Natural killer cell (primary cell): ENCODE measurements at regions of chr9 and their contacts with region 1.

Region 1: DNA sequence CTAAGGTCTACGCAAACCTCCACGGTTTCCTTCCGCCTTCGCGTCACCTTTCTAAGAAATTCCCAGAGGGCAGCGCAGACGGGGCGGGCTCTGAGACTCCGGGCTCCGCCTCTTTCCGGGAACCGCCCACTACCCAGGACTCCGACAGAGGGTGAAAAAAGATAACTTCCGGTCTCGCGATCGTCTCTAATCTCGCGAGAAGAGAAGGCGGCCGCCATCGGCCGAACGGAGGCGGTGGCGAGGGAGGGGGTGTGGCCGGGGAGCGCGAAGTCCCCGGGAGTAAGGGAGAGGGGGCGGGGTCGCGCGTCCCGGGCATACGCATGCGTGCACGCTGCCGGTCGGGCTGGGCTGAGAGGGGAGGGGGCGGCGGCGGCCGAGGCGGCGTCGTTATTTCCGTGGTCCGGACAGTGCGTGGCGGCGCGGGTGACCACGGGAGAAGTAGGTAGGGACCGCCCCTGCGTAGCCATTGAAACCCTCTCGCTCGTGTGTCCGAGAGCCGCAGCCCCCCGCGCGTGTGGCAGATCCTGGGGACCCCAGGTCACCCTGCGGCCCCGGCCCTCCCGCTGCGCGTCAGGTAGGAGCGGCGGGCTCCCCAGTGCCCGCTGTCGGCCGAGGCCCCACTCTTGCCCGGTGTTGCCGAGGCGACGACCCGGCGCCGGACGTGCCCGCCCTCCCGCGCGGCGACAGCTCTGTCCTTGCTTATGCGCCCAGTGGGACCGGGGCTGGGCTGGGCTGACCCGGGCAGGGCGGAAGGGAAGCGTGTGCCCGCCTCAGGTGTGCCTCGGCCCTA is at the start of gene NAA35:
- DNase-seq: peak; percentile 98 to 100
- ATAC-seq: peak; percentile 89 to 96 (median 89)
- H3K4me3 ChIP-seq: peak within 1 kb of the TSS; percentile 65
- H3K4me3 Mint-ChIP-seq: peak within 1 kb of the TSS; percentile 49
- H3K27ac ChIP-seq: peak within 1 kb of the TSS; percentile 96
- H3K27ac Mint-ChIP-seq: peak within 1 kb of the TSS in 1 of 2 donors; percentile 98
- H3K4me1 ChIP-seq: peaks cover 10% of the 10 kb centered on the region
- H3K4me1 Mint-ChIP-seq: peaks cover 6 to 19% of the 10 kb centered on the region in 2 donors
- H3K27me3 ChIP-seq: no peaks in the 10 kb centered on the region
- H3K27me3 Mint-ChIP-seq: no peaks in the 10 kb centered on the region
- CTCF ChIP-seq: no peak
- total RNA-seq, gene NAA35: 19.9 to 27.6 (median 21.0) TPM

Region 2: DNA sequence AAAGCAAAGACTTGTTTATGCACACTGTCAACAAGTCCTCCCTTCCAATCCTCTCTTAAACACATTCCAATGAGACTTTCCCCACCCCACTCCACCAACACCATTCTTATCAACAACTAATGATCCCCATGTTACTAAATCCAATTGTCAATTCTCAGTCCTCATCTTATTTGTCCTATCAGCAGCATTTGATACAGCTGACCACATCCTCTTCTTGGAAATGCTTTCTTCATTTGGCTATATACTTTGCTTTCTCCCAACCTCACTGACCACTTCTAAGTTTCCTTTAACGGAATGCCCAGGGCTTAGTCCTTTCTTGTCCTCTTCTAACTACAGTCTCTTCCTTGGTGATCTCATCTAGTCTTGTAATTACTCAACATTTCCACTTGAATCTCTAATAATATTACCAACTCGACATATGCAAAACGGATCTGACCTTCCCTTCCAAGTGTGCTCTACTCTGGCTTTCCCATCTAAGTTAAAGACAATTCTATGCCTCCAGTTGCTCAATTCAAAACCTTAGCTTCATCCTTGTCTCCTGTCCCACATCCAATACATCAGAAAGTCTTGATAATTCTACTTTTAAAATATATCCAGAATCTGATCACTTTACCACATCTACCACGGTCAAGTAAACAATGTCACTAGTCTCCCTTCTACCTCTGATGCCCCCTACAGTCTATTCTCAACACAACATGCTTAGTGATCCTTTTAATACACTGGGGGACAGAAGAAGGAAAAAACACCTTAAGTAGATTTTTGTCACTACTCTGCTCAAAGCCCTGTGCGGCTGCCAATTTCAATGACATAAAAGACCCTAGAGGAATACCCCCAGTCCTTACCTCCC is 224.8 kb before region 1 on chr9:
- intact Hi-C with region 1: loop called (anchors 5 kb)
- DNase-seq: peak in 1 of 2 donors; percentile 36
- ATAC-seq: peak; percentile 30 to 61 (median 32)
- H3K4me3 ChIP-seq: no peak overlapping the region
- H3K4me3 Mint-ChIP-seq: peak overlapping the region; percentile 78
- H3K27ac ChIP-seq: peak overlapping the region; percentile 81
- H3K27ac Mint-ChIP-seq: peak overlapping the region; percentile 82 to 91
- H3K4me1 ChIP-seq: peaks cover 26% of the 10 kb centered on the region
- H3K4me1 Mint-ChIP-seq: peaks cover 72 to 75% of the 10 kb centered on the region in 2 donors
- H3K27me3 ChIP-seq: no peaks in the 10 kb centered on the region
- H3K27me3 Mint-ChIP-seq: no peaks in the 10 kb centered on the region
- CTCF ChIP-seq: peak; percentile 28

Region 3: GRCh38 chr9:85741875-85742629 is 199.0 kb before region 1 on chr9 and contains the start of gene AGTPBP1:
- intact Hi-C with region 1: loop called (anchors 1 kb)
- DNase-seq: peak; percentile 98
- ATAC-seq: peak; percentile 83 to 95 (median 88)
- H3K4me3 ChIP-seq: peak within 1 kb of the TSS; percentile 87
- H3K4me3 Mint-ChIP-seq: peak within 1 kb of the TSS; percentile 93
- H3K27ac ChIP-seq: peak within 1 kb of the TSS; percentile 92
- H3K27ac Mint-ChIP-seq: peak within 1 kb of the TSS; percentile 91 to 94
- H3K4me1 ChIP-seq: peaks cover 26% of the 10 kb centered on the region
- H3K4me1 Mint-ChIP-seq: peaks cover 67 to 77% of the 10 kb centered on the region in 2 donors
- H3K27me3 ChIP-seq: no peaks in the 10 kb centered on the region
- H3K27me3 Mint-ChIP-seq: no peaks in the 10 kb centered on the region
- CTCF ChIP-seq: no peak
- total RNA-seq, gene AGTPBP1: 140 to 150 (median 140) TPM

Region 4: DNA sequence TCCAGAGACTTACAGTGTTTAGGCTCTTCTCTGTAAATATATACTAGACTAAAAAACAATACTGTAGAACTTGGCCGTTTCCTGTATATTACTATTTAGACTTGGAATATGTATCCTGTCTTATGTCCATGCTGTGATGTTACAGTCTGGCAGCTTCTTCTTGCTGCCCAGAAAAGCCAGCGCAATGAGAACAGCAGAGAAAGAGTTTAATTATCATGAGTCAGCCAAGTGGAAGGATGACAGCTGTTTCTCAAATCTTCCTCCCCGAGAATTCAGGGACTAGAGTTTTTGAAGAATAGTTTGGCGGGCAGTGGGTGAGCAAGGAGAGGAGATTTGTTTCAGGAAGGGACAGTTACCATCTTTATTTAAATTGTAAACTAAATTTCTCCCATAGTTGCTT is 37.5 kb after region 1 on chr9:
- intact Hi-C with region 1: no loop called
- DNase-seq: no peak
- ATAC-seq: no peak
- H3K4me3 ChIP-seq: no peak overlapping the region
- H3K4me3 Mint-ChIP-seq: no peak overlapping the region
- H3K27ac ChIP-seq: no peak overlapping the region
- H3K27ac Mint-ChIP-seq: peak overlapping the region in 1 of 2 donors; percentile 7
- H3K4me1 ChIP-seq: no peaks in the 10 kb centered on the region
- H3K4me1 Mint-ChIP-seq: peaks cover 0 to 7% of the 10 kb centered on the region in 2 donors
- H3K27me3 ChIP-seq: no peaks in the 10 kb centered on the region
- H3K27me3 Mint-ChIP-seq: no peaks in the 10 kb centered on the region
- CTCF ChIP-seq: no peak

Region 5: DNA sequence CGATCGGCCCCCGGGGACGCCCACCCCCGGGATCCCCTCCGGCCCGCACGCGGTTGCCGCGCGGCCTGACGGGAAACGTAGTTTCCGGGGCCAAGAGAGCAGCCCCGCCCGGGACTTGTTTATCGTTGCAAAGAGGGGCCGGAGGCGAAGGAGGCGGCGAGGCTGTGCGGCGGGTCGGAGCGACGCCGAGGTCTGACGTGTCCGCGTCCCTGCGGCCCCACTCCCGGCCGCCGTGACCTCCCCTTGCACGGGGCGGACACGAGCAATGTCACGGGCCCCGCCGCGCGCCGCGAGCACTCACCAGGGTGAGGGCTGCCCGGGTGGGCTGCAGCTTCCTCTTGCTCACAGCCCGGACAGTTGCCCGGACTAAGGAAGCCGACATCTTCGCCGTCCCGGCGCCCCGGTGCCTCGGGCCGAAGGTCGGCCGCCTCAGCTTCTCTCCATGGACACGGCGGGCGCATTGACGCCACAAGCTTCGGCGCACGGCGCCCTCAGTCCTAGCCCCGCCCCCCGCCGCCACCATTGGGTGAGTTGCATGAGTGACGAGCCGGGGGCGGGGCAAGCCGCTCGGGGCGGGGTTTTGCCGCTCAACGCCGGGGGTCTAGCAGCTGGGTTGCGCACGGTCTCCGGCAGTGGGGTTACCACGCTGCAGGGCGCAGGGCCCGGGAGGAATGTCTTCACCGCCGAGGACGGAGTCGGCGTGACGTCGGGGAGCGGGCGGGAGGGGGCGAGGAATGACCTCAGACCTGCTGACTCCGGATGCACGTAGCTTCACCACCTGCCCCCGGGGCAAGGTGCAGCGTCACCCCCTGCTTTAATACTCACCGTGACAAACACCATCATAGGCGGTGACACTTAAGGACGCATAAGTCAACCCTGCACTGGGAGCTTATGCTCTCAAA is 341.3 kb after region 1 on chr9 and contains the start of gene ISCA1:
- intact Hi-C with region 1: loop called (anchors 2 kb)
- DNase-seq: peak; percentile 97 to 99
- ATAC-seq: peak; percentile 83 to 95 (median 84)
- H3K4me3 ChIP-seq: peak within 1 kb of the TSS; percentile 87
- H3K4me3 Mint-ChIP-seq: peak within 1 kb of the TSS; percentile 93
- H3K27ac ChIP-seq: peak within 1 kb of the TSS; percentile 98
- H3K27ac Mint-ChIP-seq: peak within 1 kb of the TSS; percentile 95 to 98
- H3K4me1 ChIP-seq: peaks cover 17% of the 10 kb centered on the region
- H3K4me1 Mint-ChIP-seq: peaks cover 34 to 38% of the 10 kb centered on the region in 2 donors
- H3K27me3 ChIP-seq: no peaks in the 10 kb centered on the region
- H3K27me3 Mint-ChIP-seq: no peaks in the 10 kb centered on the region
- CTCF ChIP-seq: no peak
- total RNA-seq, gene ISCA1: 57.3 to 67.6 (median 63.4) TPM

Region 6: DNA sequence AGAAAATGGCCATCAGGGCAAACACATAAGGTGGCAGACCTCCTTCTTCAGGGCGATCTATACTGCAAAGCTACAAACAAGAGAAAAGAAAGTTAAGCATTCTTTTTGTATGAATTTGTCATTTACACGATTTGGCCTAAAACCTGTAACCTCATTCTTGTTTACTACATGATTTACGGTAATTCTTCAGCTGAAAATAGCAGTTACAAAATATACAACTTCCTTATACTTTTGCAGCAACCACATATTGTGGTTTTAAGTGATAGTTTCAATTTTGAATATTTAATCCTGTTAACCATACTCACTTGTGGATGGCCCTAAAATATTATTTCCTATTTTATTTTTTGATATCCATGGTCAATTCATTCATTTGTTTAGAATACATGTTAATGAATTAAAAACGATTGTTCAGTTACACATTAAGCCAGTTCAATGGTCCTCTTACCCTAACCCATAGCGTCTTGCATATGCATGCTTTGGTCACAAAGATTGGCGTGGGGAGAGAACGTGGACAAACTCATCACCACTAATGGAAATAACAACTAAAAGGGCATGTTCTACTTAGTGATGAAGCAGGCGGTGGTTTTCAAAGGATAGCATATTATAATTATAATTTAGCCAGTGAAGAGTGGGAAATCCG is 396.6 kb after region 1 on chr9:
- intact Hi-C with region 1: loop called (anchors 5 kb)
- DNase-seq: peak in 1 of 2 donors; percentile 52
- ATAC-seq: peak; percentile 75 to 90 (median 81)
- H3K4me3 ChIP-seq: peak overlapping the region; percentile 33
- H3K4me3 Mint-ChIP-seq: peak overlapping the region; percentile 88
- H3K27ac ChIP-seq: peak overlapping the region; percentile 90
- H3K27ac Mint-ChIP-seq: peak overlapping the region; percentile 94
- H3K4me1 ChIP-seq: peaks cover 13% of the 10 kb centered on the region
- H3K4me1 Mint-ChIP-seq: peaks cover 31 to 35% of the 10 kb centered on the region in 2 donors
- H3K27me3 ChIP-seq: no peaks in the 10 kb centered on the region
- H3K27me3 Mint-ChIP-seq: no peaks in the 10 kb centered on the region
- CTCF ChIP-seq: no peak